WTC11 (cell line): ENCODE measurements at regions of chr3 and their contacts with region 1.

Region 1: DNA sequence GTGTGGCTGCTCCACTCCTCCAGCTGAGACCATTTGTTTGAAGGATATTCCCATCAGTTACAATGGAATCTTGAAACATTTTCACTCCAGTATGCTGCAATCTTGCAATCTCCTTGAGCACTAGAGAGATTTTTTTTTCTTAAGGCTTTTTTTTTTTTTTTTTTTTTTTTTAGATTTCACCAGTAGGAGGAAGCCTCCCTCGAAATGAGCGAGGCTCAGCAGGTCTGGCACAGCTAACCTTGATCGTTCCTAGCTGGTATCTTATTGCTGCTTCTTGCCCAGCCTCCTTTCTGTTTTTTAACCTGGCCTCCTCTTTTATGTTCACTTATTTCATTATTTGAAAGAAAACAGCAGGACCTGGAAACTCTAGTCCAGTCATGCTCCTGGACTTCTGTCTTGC is 48.1 kb downstream of the RAP2B start:
- DNase-seq: no peak
- ATAC-seq: peak; percentile 45
- H3K4me3 Mint-ChIP-seq: peak overlapping the region; percentile 44
- H3K27ac Mint-ChIP-seq: peak overlapping the region; percentile 82
- H3K4me1 Mint-ChIP-seq: peaks cover 35% of the 10 kb centered on the region
- H3K27me3 Mint-ChIP-seq: no peaks in the 10 kb centered on the region
- CTCF ChIP-seq: no peak

Region 2: GRCh38 chr3:153023896-153024295 is 186.2 kb before region 1 on chr3:
- CTCF ChIA-PET with region 1: no interaction called
- POLR2A ChIA-PET with region 1: no interaction called
- DNase-seq: no peak
- ATAC-seq: no peak
- H3K4me3 Mint-ChIP-seq: no peak overlapping the region
- H3K27ac Mint-ChIP-seq: no peak overlapping the region
- H3K4me1 Mint-ChIP-seq: no peaks in the 10 kb centered on the region
- H3K27me3 Mint-ChIP-seq: no peaks in the 10 kb centered on the region
- CTCF ChIP-seq: no peak

Region 3: DNA sequence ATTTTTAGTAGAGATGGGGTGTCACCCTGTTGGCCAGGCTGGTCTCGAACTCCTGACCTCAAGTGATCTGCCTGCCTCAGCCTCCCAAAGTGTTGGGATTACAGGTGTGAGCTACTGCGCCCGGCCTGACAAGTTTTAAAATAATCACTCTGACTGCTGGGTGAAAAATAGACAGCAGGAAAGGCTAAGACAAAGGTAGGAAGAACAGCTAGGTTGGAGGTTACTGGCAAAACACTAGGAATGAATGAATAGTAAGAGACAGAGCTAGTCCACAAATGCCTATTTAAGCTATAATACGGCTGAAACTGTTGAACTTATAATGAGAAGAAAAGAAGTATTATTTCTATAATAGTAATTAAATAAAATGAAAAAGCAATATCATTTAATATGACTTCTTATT is 94.8 kb before region 1 on chr3:
- CTCF ChIA-PET with region 1: no interaction called
- POLR2A ChIA-PET with region 1: interaction called, 10 read pairs
- DNase-seq: no peak
- ATAC-seq: no peak
- H3K4me3 Mint-ChIP-seq: no peak overlapping the region
- H3K27ac Mint-ChIP-seq: no peak overlapping the region
- H3K4me1 Mint-ChIP-seq: no peaks in the 10 kb centered on the region
- H3K27me3 Mint-ChIP-seq: no peaks in the 10 kb centered on the region
- CTCF ChIP-seq: no peak

Region 4: GRCh38 chr3:153414982-153415381 is 204.8 kb after region 1 on chr3:
- CTCF ChIA-PET with region 1: no interaction called
- POLR2A ChIA-PET with region 1: no interaction called
- DNase-seq: no peak
- ATAC-seq: no peak
- H3K4me3 Mint-ChIP-seq: no peak overlapping the region
- H3K27ac Mint-ChIP-seq: no peak overlapping the region
- H3K4me1 Mint-ChIP-seq: no peaks in the 10 kb centered on the region
- H3K27me3 Mint-ChIP-seq: no peaks in the 10 kb centered on the region
- CTCF ChIP-seq: no peak